A549 (cell line): ENCODE measurements at regions of chr10 and their contacts with region 1.

Region 1: GRCh38 chr10:30591249-30591670 is 38.3 kb downstream of the LYZL2 start:
- DNase-seq: peak; percentile 48 to 67
- ATAC-seq: peak; percentile 77 to 83
- H3K4me3 ChIP-seq: no peak overlapping the region
- H3K27ac ChIP-seq: peak overlapping the region; percentile 35 to 76; a peak in 5 of 6 replicates
- H3K4me1 ChIP-seq: 0 out of 3 replicates have a peak, but pooled peaks cover 5% of the 10 kb centered on the region
- CTCF ChIP-seq: peak; percentile 86
- EP300 ChIP-seq: no peak
- POLR2A ChIP-seq: no peak
- RAD21 ChIP-seq: peak; percentile 86 to 93

Region 2: GRCh38 chr10:30359373-30360206 is 231.7 kb before region 1 on chr10:
- CTCF ChIA-PET with region 1: interaction called, 52 read pairs
- POLR2A ChIA-PET with region 1: no interaction called
- DNase-seq: peak; percentile 67 to 79
- ATAC-seq: peak; percentile 94 to 95
- H3K4me3 ChIP-seq: no peak overlapping the region
- H3K27ac ChIP-seq: peak overlapping the region in 1 of 2 experiments; percentile 70; a peak in 2 of 6 replicates
- H3K4me1 ChIP-seq: peaks cover 6% of the 10 kb centered on the region; the same call in 2 of the 3 replicates
- CTCF ChIP-seq: peak; percentile 82
- EP300 ChIP-seq: no peak
- POLR2A ChIP-seq: no peak
- RAD21 ChIP-seq: peak in 1 of 2 experiments; percentile 26; a peak in 2 of 5 replicates

Region 3: DNA sequence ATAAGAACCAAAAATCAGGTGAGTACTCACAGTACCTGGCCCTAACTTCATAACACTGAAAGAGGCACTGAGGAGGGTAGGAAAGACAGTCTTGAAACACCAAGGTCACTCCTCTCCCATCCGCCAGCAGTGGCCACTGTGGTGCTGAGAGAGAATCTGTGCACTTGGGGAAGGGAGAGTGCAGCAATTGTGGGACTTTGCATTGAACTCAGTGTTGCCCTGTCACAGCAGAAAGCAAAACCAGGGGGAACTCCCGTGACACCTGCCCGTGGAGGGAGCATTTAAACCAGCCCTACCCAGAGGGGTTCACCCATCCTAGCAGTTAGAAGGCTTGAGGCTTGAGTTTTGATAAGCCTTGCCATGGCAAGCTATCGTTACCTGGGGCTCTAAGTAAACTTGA is 192.5 kb before region 1 on chr10:
- CTCF ChIA-PET with region 1: interaction called, 216 read pairs
- POLR2A ChIA-PET with region 1: no interaction called
- DNase-seq: peak in 1 of 2 experiments; percentile 17
- ATAC-seq: peak in 1 of 2 experiments; percentile 58; a peak in 2 of 6 replicates
- H3K4me3 ChIP-seq: no peak overlapping the region
- H3K27ac ChIP-seq: peak overlapping the region in 1 of 2 experiments; percentile 26; a peak in 1 of 6 replicates
- H3K4me1 ChIP-seq: no peaks in the 10 kb centered on the region
- CTCF ChIP-seq: no peak
- EP300 ChIP-seq: no peak
- POLR2A ChIP-seq: no peak
- RAD21 ChIP-seq: peak in 1 of 2 experiments; percentile 30; a peak in 1 of 5 replicates

Region 4: GRCh38 chr10:30422981-30423654 is 168.1 kb before region 1 on chr10:
- CTCF ChIA-PET with region 1: interaction called, 18 read pairs
- POLR2A ChIA-PET with region 1: no interaction called
- DNase-seq: peak; percentile 89 to 96
- ATAC-seq: peak; percentile 96 to 99
- H3K4me3 ChIP-seq: peak overlapping the region; percentile 9; the same call in 1 of the 3 replicates
- H3K27ac ChIP-seq: peak overlapping the region; percentile 90 to 94
- H3K4me1 ChIP-seq: peaks cover 52% of the 10 kb centered on the region
- CTCF ChIP-seq: no peak
- EP300 ChIP-seq: peak; percentile 49 to 80; a peak in 3 of 5 replicates
- POLR2A ChIP-seq: peak; percentile 19; the same call in 1 of the 2 replicates
- RAD21 ChIP-seq: no peak; a peak in 2 of 5 replicates

Region 5: GRCh38 chr10:30519639-30520038 is 71.6 kb before region 1 on chr10:
- CTCF ChIA-PET with region 1: interaction called, 11 read pairs
- POLR2A ChIA-PET with region 1: no interaction called
- DNase-seq: no peak
- ATAC-seq: no peak
- H3K4me3 ChIP-seq: no peak overlapping the region
- H3K27ac ChIP-seq: peak overlapping the region in 1 of 2 experiments; percentile 92; a peak in 3 of 6 replicates
- H3K4me1 ChIP-seq: peaks cover 23% of the 10 kb centered on the region; the same call in 2 of the 3 replicates
- CTCF ChIP-seq: no peak
- EP300 ChIP-seq: no peak
- POLR2A ChIP-seq: no peak
- RAD21 ChIP-seq: no peak

Region 6: GRCh38 chr10:30542001-30542894 is 49.0 kb before region 1 on chr10:
- CTCF ChIA-PET with region 1: interaction called, 37 read pairs
- POLR2A ChIA-PET with region 1: no interaction called
- DNase-seq: peak in 1 of 2 experiments; percentile 78
- ATAC-seq: peak; percentile 55 to 63; a peak in 5 of 6 replicates
- H3K4me3 ChIP-seq: no peak overlapping the region
- H3K27ac ChIP-seq: peak overlapping the region; percentile 78 to 88
- H3K4me1 ChIP-seq: peaks cover 61% of the 10 kb centered on the region
- CTCF ChIP-seq: no peak
- EP300 ChIP-seq: peak; percentile 58 to 88; a peak in 3 of 5 replicates
- POLR2A ChIP-seq: no peak
- RAD21 ChIP-seq: no peak; a peak in 1 of 5 replicates

Region 7: DNA sequence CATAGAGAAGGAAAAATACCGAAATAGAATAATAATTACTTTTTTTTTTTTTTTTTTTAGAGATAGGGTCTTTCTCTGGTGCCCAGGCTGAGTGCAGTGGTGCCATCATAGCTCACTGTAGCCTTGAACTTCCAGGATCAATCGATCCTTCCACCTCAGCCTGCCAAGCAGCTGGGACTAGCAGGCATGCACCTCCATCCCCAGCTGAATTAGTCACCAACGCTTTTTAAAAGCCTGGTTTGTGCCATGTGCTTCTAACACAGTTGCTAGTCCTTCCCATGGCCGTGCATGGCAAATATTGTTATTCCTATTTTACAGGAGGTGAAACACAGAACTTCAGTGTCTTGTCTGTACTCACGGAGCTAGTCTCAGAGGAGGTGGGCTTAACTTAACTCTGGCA is 15.1 kb after region 1 on chr10:
- CTCF ChIA-PET with region 1: interaction called, 41 read pairs
- POLR2A ChIA-PET with region 1: no interaction called
- DNase-seq: peak in 1 of 2 experiments; percentile 44
- ATAC-seq: peak in 1 of 2 experiments; percentile 37; a peak in 3 of 6 replicates
- H3K4me3 ChIP-seq: peak overlapping the region; percentile 13; the same call in 1 of the 3 replicates
- H3K27ac ChIP-seq: peak overlapping the region; percentile 80 to 86
- H3K4me1 ChIP-seq: peaks cover 29% of the 10 kb centered on the region
- CTCF ChIP-seq: no peak
- EP300 ChIP-seq: no peak
- POLR2A ChIP-seq: no peak
- RAD21 ChIP-seq: no peak